MCF 10A (cell line): ENCODE measurements at regions of chr1 and their contacts with region 1.

Region 1: DNA sequence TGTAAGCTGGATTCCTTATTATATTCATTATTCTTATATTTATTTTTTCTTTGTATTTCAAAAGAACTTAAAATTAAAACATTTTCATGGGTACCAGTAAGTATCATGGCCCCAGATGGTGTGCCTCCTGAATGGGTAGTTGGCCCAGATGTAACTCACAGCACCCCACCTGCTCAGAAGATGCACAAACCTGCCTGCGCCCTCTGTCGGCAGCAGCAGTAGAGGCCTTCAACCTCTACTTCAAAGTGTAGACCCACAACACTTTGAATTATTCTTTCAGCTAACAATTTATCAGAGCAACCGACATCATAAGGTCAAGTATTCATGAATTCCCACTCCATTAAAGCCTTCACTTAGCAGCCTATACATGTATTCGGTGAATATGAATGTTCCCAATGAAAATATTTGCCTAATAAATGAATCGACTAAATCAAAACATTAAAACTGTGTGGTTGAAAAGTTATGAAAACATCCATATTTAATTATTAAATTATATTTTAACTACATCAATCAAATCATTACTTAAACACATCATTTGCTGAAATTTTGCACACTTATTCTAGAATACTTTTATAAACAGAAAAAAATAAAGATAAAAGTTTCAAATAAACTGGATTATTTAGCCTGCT is 25.4 kb downstream of the PIGM start:
- DNase-seq: peak; percentile 87
- H3K4me3 Mint-ChIP-seq: no peak overlapping the region
- H3K27ac Mint-ChIP-seq: no peak overlapping the region
- H3K4me1 Mint-ChIP-seq: peaks cover 11% of the 10 kb centered on the region
- H3K27me3 Mint-ChIP-seq: no peaks in the 10 kb centered on the region
- CTCF ChIP-seq: peak; percentile 99

Region 2: DNA sequence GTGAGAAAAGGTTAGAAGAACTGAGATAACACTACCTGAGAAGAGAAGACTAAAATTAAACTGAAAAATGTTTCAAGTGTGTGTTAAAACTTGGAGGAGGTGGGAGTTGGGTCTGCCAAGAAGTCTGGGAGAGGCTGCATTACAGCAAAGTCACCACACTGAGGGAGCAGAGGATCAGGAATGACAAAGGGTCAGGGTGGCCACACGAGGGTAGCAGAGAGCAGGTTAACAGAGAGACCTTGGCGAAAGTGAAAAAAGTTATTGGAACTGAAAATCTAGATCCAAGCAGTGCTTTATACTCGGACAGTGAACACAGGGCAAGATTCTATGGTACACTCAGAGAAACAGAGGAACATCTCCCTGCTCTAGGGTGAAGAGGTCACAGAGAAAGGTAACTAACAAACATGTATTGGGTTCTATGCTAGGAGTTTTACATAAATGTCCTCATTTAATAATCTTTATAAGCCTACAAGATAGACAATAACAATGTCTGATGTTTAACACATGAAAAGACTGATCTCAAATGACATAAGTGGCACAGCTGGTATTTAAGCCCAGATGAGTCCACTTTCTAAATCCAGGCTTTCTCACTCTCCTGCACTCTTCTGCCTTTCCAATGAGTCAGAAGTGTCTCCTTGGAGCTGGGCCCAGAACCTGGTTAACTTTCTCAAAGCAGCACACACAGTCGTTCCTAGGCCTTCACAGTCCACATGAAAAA is 845.3 kb before region 1 on chr1:
- CTCF ChIA-PET with region 1: interaction called, 7 read pairs
- POLR2A ChIA-PET with region 1: no interaction called
- intact Hi-C with region 1: loop called (anchors 1 kb)
- DNase-seq: peak; percentile 99
- H3K4me3 Mint-ChIP-seq: peak overlapping the region; percentile 43
- H3K27ac Mint-ChIP-seq: peak overlapping the region; percentile 69
- H3K4me1 Mint-ChIP-seq: peaks cover 34% of the 10 kb centered on the region
- H3K27me3 Mint-ChIP-seq: peaks cover 36% of the 10 kb centered on the region
- CTCF ChIP-seq: peak; percentile 100

Region 3: GRCh38 chr1:159900086-159900680 is 106.2 kb before region 1 on chr1 and contains the start of gene CFAP45:
- CTCF ChIA-PET with region 1: interaction called, 467 read pairs
- POLR2A ChIA-PET with region 1: no interaction called
- intact Hi-C with region 1: no loop called
- DNase-seq: peak; percentile 79
- H3K4me3 Mint-ChIP-seq: peak within 1 kb of the TSS; percentile 60
- H3K27ac Mint-ChIP-seq: no peak within 1 kb of the TSS
- H3K4me1 Mint-ChIP-seq: peaks cover 10% of the 10 kb centered on the region
- H3K27me3 Mint-ChIP-seq: no peaks in the 10 kb centered on the region
- CTCF ChIP-seq: no peak
- total RNA-seq, gene CFAP45: 0.32 and 0.40 TPM in 2 replicates

Region 4: GRCh38 chr1:159936273-159936904 is 70.0 kb before region 1 on chr1:
- CTCF ChIA-PET with region 1: interaction called, 1,675 read pairs
- POLR2A ChIA-PET with region 1: interaction called, 38 read pairs
- intact Hi-C with region 1: loop called (anchors 1 kb)
- DNase-seq: peak; percentile 85
- H3K4me3 Mint-ChIP-seq: no peak overlapping the region
- H3K27ac Mint-ChIP-seq: no peak overlapping the region
- H3K4me1 Mint-ChIP-seq: peaks cover 22% of the 10 kb centered on the region
- H3K27me3 Mint-ChIP-seq: no peaks in the 10 kb centered on the region
- CTCF ChIP-seq: peak; percentile 100

Region 5: GRCh38 chr1:159970932-159971342 is 35.5 kb before region 1 on chr1:
- CTCF ChIA-PET with region 1: interaction called, 1,675 read pairs
- POLR2A ChIA-PET with region 1: no interaction called
- intact Hi-C with region 1: no loop called
- DNase-seq: no peak
- H3K4me3 Mint-ChIP-seq: no peak overlapping the region
- H3K27ac Mint-ChIP-seq: no peak overlapping the region
- H3K4me1 Mint-ChIP-seq: peaks cover 6% of the 10 kb centered on the region
- H3K27me3 Mint-ChIP-seq: no peaks in the 10 kb centered on the region
- CTCF ChIP-seq: no peak

Region 6: GRCh38 chr1:160018900-160019299 is 12.5 kb after region 1 on chr1:
- CTCF ChIA-PET with region 1: interaction called, 248 read pairs
- POLR2A ChIA-PET with region 1: interaction called, 3 read pairs
- intact Hi-C with region 1: no loop called
- DNase-seq: peak; percentile 67
- H3K4me3 Mint-ChIP-seq: no peak overlapping the region
- H3K27ac Mint-ChIP-seq: no peak overlapping the region
- H3K4me1 Mint-ChIP-seq: peaks cover 27% of the 10 kb centered on the region
- H3K27me3 Mint-ChIP-seq: no peaks in the 10 kb centered on the region
- CTCF ChIP-seq: no peak